Activated CD4-positive, alpha-beta memory T cell treated with anti-CD3 and anti-CD28 coated beads for 36 hours (primary cell): ENCODE measurements at regions of chr17 and their contacts with region 1.

Region 1: GRCh38 chr17:77280980-77281903 is 140.5 kb downstream of the SEC14L1 start:
- DNase-seq: peak; percentile 65
- H3K4me3 Mint-ChIP-seq: peak overlapping the region; percentile 70
- H3K27ac Mint-ChIP-seq: peak overlapping the region; percentile 69
- H3K4me1 Mint-ChIP-seq: peaks cover 16% of the 10 kb centered on the region
- H3K27me3 Mint-ChIP-seq: peaks cover 22% of the 10 kb centered on the region

Region 2: GRCh38 chr17:77186141-77186604 is 95.1 kb before region 1 on chr17:
- CTCF ChIA-PET with region 1: no interaction called
- POLR2A ChIA-PET with region 1: no interaction called
- intact Hi-C with region 1: no loop called
- DNase-seq: peak; percentile 34
- H3K4me3 Mint-ChIP-seq: no peak overlapping the region
- H3K27ac Mint-ChIP-seq: no peak overlapping the region
- H3K4me1 Mint-ChIP-seq: peaks cover 48% of the 10 kb centered on the region
- H3K27me3 Mint-ChIP-seq: no peaks in the 10 kb centered on the region

Region 3: DNA sequence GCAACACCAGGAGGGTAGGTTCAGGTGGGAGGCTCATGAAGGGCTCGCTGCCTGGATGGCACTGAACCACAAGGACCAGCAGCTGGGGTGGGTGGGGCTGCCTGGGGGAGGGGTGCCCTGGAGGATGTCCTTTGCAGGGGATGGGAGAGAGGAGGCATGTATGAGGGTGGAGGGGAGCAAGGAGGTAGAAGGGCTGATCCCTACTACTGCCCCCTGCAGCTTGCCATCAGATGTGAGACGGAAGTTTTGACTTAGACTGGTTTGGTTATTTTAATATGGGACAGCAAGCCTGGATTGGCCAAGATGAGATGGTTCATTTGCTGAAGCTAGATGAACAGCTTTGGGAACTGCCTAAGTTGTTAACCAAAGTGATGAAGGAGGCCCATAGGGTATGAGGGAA is 24.5 kb before region 1 on chr17:
- CTCF ChIA-PET with region 1: no interaction called
- POLR2A ChIA-PET with region 1: no interaction called
- intact Hi-C with region 1: no loop called
- DNase-seq: no peak
- H3K4me3 Mint-ChIP-seq: no peak overlapping the region
- H3K27ac Mint-ChIP-seq: no peak overlapping the region
- H3K4me1 Mint-ChIP-seq: no peaks in the 10 kb centered on the region
- H3K27me3 Mint-ChIP-seq: peaks cover 3% of the 10 kb centered on the region

Region 4: DNA sequence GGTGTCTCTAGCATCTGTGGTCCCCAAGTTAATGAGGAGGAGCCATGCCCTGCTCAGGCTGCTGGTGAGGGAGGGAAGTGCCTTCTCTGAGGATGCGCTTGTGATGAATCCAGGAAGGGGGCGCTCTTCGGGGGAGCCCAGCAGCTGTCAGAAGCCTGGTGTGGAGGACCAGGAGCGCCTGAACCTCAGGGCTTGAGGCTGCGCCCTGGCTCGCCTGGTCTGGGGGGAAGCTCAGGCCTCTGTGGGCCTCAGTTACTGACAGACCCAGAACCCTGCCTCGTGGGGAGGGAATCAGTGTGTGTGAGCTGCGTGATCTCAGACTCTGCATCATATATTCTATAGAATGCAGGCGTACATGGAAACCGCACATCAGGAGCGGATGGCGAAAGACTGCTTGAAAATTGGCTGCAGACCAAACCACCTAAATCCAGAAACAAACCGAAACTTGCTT is 14.3 kb before region 1 on chr17:
- CTCF ChIA-PET with region 1: no interaction called
- POLR2A ChIA-PET with region 1: no interaction called
- intact Hi-C with region 1: no loop called
- DNase-seq: no peak
- H3K4me3 Mint-ChIP-seq: no peak overlapping the region
- H3K27ac Mint-ChIP-seq: no peak overlapping the region
- H3K4me1 Mint-ChIP-seq: no peaks in the 10 kb centered on the region
- H3K27me3 Mint-ChIP-seq: no peaks in the 10 kb centered on the region

Region 5: DNA sequence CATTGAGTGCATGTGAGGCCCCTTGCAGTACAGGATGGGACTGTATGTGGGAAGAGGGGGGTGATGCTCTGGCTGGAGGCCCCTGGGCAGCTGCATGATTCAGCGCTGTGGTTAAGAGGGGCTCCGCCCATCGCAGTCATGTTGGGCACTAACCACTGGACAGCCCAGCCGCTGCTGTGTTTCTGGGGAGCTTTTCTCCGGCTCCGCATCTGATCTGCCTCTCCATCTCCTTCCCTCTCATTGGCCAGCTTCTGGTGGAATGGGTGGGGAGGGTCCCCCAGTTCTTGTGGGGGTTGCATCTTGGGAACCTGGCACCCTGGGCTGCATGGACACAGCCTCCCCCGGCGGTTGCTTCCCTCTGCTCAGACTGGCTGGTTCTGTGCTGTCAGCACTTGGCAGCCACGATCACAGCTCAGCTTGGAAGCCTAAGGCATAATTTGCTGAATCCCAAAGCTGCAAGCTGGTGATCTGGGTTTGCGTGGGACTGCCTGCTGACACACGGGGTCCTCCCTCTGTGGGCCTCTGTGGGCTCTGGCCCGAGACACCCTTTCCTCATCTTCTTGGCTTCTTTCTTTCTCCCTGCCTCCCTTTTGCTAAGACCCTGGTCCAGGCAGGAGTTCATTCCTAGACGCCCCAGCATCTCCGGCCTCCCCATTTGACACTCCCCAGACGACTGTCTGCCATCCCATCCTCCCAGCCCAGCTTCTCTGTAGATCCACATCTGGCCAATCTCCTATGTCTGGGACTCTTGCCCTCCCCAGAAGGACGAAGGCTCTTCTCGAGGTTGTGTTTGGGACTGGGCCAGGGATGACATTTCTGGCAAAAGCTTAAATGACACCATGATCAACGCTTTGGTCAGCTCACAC is 27.9 kb after region 1 on chr17:
- CTCF ChIA-PET with region 1: no interaction called
- POLR2A ChIA-PET with region 1: no interaction called
- intact Hi-C with region 1: loop called (anchors 2 kb)
- DNase-seq: no peak
- H3K4me3 Mint-ChIP-seq: no peak overlapping the region
- H3K27ac Mint-ChIP-seq: no peak overlapping the region
- H3K4me1 Mint-ChIP-seq: no peaks in the 10 kb centered on the region
- H3K27me3 Mint-ChIP-seq: no peaks in the 10 kb centered on the region

Region 6: GRCh38 chr17:77325577-77326075 is 44.4 kb after region 1 on chr17:
- CTCF ChIA-PET with region 1: no interaction called
- POLR2A ChIA-PET with region 1: no interaction called
- intact Hi-C with region 1: loop called (anchors 5 kb)
- DNase-seq: peak; percentile 41
- H3K4me3 Mint-ChIP-seq: peak overlapping the region; percentile 33
- H3K27ac Mint-ChIP-seq: peak overlapping the region; percentile 90
- H3K4me1 Mint-ChIP-seq: peaks cover 40% of the 10 kb centered on the region
- H3K27me3 Mint-ChIP-seq: no peaks in the 10 kb centered on the region